K562 (cell line): ENCODE measurements at regions of chr2 and their contacts with region 1.

Region 1: GRCh38 chr2:58688813-58689212 is 447.7 kb upstream of the FANCL start:
- DNase-seq: peak in 2 of 4 experiments; percentile 42 to 93
- ATAC-seq: peak; percentile 79
- H3K4me3 ChIP-seq: no peak overlapping the region
- H3K27ac ChIP-seq: peak overlapping the region; percentile 49; the same call in 2 of the 3 replicates
- H3K4me1 ChIP-seq: peaks cover 3 to 4% of the 10 kb centered on the region in 2 experiments; a peak in 4 of 5 replicates
- H3K27me3 ChIP-seq: no peaks in the 10 kb centered on the region
- CTCF ChIP-seq: no peak
- EP300 ChIP-seq: peak; percentile 88
- POLR2A ChIP-seq: no peak
- RAD21 ChIP-seq: peak in 1 of 2 experiments; percentile 8; a peak in 1 of 4 replicates

Region 2: GRCh38 chr2:58387705-58388104 is 301.1 kb before region 1 on chr2:
- CTCF ChIA-PET with region 1: no interaction called
- POLR2A ChIA-PET with region 1: no interaction called
- in situ Hi-C with region 1: no loop called
- intact Hi-C with region 1: no loop called
- DNase-seq: no peak
- ATAC-seq: no peak
- H3K4me3 ChIP-seq: no peak overlapping the region
- H3K27ac ChIP-seq: no peak overlapping the region
- H3K4me1 ChIP-seq: no peaks in the 10 kb centered on the region
- H3K27me3 ChIP-seq: no peaks in the 10 kb centered on the region
- CTCF ChIP-seq: no peak
- EP300 ChIP-seq: no peak
- POLR2A ChIP-seq: no peak
- RAD21 ChIP-seq: no peak

Region 3: GRCh38 chr2:58731488-58731869 is 42.7 kb after region 1 on chr2:
- CTCF ChIA-PET with region 1: no interaction called
- POLR2A ChIA-PET with region 1: interaction called, 3 read pairs
- in situ Hi-C with region 1: no loop called
- intact Hi-C with region 1: loop called (anchors 1 kb)
- DNase-seq: peak; percentile 15 to 83 (median 43)
- ATAC-seq: peak; percentile 81
- H3K4me3 ChIP-seq: no peak overlapping the region
- H3K27ac ChIP-seq: peak overlapping the region; percentile 81
- H3K4me1 ChIP-seq: peaks cover 0 to 61% of the 10 kb centered on the region in 2 experiments; a peak in 4 of 5 replicates
- H3K27me3 ChIP-seq: no peaks in the 10 kb centered on the region
- CTCF ChIP-seq: no peak
- EP300 ChIP-seq: peak; percentile 98
- POLR2A ChIP-seq: no peak
- RAD21 ChIP-seq: peak in 1 of 2 experiments; percentile 14; a peak in 2 of 4 replicates